ENCODE measurements at regions of chr11 and their contacts with region 1.

Region 1: GRCh38 chr11:85826116-85826855 is 15.3 kb upstream of the SYTL2 start:
- DNase-seq: peak; percentile 39
- ATAC-seq: no peak
- H3K4me3 Mint-ChIP-seq: no peak overlapping the region
- H3K27ac Mint-ChIP-seq: no peak overlapping the region
- H3K4me1 Mint-ChIP-seq: peaks cover 62% of the 10 kb centered on the region
- H3K27me3 Mint-ChIP-seq: no peaks in the 10 kb centered on the region
- CTCF ChIP-seq: peak; percentile 17

Region 2: GRCh38 chr11:85495918-85496317 is 330.4 kb before region 1 on chr11:
- CTCF ChIA-PET with region 1: no interaction called
- POLR2A ChIA-PET with region 1: no interaction called
- intact Hi-C with region 1: no loop called
- DNase-seq: peak; percentile 5
- ATAC-seq: no peak
- H3K4me3 Mint-ChIP-seq: no peak overlapping the region
- H3K27ac Mint-ChIP-seq: no peak overlapping the region
- H3K4me1 Mint-ChIP-seq: no peaks in the 10 kb centered on the region
- H3K27me3 Mint-ChIP-seq: no peaks in the 10 kb centered on the region
- CTCF ChIP-seq: no peak

Region 3: GRCh38 chr11:85694386-85694980 is 131.8 kb before region 1 on chr11:
- CTCF ChIA-PET with region 1: interaction called, 5 read pairs
- POLR2A ChIA-PET with region 1: no interaction called
- intact Hi-C with region 1: loop called (anchors 5 kb)
- DNase-seq: no peak
- ATAC-seq: peak; percentile 55
- H3K4me3 Mint-ChIP-seq: no peak overlapping the region
- H3K27ac Mint-ChIP-seq: no peak overlapping the region
- H3K4me1 Mint-ChIP-seq: peaks cover 15% of the 10 kb centered on the region
- H3K27me3 Mint-ChIP-seq: no peaks in the 10 kb centered on the region
- CTCF ChIP-seq: peak; percentile 25

Region 4: DNA sequence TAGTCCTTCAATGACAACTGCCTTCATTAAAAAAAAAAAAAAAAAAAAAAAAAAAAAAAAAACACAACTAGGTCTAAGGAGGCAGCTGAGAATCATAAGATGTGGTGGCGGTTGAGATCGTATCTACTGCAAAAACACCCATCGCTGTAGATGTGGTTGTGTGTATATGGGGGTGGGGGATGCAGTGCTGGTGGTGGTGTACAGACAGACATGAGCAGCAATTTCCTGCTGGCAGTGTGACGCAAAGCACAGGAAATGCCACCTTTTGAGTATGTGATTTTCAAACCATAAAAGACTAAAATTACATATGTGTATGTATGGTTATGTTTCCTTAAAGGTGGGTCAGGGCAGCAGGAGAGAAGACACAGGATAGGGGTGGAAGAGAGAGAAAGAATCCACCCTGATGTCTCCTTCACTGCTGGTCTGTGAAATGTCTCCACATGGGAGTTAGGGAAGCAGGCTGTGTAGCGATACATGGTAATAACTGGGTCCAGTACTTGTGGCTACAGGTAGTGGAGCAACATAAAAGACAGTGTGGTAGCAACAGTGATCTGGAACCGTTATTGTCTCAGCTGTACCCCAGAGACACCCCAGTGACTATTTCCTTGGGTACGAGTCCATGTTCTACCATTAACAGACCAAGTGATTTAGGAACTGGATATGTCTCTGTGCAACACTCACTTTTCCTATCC is 73.2 kb before region 1 on chr11:
- CTCF ChIA-PET with region 1: no interaction called
- POLR2A ChIA-PET with region 1: interaction called, 3 read pairs
- intact Hi-C with region 1: loop called (anchors 5 kb)
- DNase-seq: peak; percentile 97
- ATAC-seq: peak; percentile 85
- H3K4me3 Mint-ChIP-seq: peak overlapping the region; percentile 66
- H3K27ac Mint-ChIP-seq: peak overlapping the region; percentile 97
- H3K4me1 Mint-ChIP-seq: peaks cover 92% of the 10 kb centered on the region
- H3K27me3 Mint-ChIP-seq: no peaks in the 10 kb centered on the region
- CTCF ChIP-seq: no peak

Region 5: DNA sequence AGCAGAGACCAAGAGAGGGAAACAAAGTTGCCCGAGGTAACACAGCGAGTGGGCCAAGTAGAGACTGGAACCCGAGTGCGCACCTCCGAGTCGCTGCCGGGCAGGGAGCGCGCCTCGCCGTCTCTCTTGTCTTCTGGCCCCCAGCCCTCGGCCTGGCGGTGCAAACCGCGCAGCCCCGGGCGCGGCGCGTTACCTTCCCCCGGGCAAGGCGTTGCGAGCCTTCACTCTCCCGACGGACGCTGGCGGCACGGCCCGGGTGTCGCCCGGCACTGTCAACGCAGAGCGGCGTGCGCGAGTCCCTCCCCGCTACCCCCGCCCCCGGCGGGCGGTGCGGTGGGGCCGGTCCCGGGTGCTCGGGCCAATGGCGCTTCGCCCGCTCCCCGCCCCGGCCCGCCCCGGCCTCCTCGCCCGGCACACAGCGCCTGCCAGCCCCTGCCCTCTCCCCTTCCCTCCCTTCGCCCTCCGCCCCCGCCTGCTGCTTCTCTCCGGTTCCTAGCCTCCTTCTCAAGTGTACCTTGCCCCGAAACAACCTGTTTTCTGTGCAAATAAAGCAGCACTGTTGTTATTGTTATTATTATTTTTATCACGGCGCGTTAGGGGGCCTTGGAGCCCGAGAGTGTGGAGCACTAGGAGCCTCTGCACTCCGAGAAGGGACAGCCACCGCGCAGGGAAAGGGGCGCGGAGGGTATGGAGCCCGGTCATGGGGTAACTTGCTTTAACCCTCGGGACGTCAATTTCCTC is 15.2 kb before region 1 on chr11 and contains the start of gene SYTL2:
- CTCF ChIA-PET with region 1: interaction called, 11 read pairs
- POLR2A ChIA-PET with region 1: interaction called, 4 read pairs
- intact Hi-C with region 1: no loop called
- DNase-seq: peak; percentile 71
- ATAC-seq: peak; percentile 89
- H3K4me3 Mint-ChIP-seq: peak within 1 kb of the TSS; percentile 80
- H3K27ac Mint-ChIP-seq: peak within 1 kb of the TSS; percentile 80
- H3K4me1 Mint-ChIP-seq: peaks cover 23% of the 10 kb centered on the region
- H3K27me3 Mint-ChIP-seq: peaks cover 9% of the 10 kb centered on the region
- CTCF ChIP-seq: no peak
- total RNA-seq, gene SYTL2: 9.5 to 11.2 TPM